ENCODE measurements at regions of chr14 and their contacts with region 1.

Region 1: DNA sequence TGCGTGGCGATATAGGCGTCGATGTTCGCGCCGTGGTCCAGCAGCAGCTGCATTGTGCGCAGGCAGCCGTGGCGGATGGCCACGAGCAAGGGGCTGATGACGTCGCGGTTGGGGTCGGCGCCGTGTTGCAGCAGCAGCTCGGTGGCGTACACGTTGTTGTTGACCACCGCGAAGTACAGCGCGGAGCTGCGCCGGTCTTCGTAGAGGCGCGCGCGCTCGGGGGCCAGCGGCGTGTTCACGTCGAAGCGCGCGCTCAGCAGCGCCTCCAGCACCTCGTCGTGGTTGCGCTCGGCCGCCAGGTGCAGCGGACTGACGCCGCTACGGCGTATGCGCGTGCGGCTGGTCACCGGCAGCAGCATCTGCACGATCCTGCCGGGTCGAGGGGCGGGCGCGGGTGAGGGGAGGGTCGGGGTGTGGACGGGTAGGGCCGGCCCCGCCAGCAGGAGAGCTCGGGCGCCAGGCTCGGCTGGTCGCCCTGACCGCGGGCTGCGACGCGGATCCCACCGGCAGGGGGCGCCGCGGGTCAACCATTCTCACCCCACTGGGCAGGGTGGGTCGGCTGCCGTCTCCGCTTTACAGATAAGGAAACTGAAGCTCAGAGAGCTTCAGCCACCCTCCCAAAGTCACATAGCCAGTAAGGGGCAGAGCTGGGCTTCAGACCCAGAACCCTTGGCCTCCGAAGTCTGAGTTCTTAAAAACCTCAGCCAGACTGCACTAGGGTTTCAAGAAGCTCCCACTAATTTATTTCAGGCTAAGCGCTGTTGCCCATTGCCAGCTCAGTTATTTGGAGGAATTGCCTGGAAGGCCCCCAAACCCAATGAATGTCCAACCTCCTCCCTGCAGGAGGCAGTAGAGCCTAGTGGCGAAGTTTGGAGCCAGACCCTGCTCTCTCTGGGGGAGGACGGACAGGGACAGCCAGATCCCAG is 12.4 kb downstream of the FAM181A start:
- DNase-seq: peak; percentile 76 to 86
- H3K4me3 ChIP-seq: peak overlapping the region; percentile 30 to 31
- H3K27ac ChIP-seq: peak overlapping the region; percentile 37 to 62
- H3K4me1 ChIP-seq: peaks cover 0 to 27% (median 12%) of the 10 kb centered on the region in 4 donors
- H3K27me3 ChIP-seq: no peaks in the 10 kb centered on the region
- CTCF ChIP-seq: peak; percentile 88 to 95

Region 2: GRCh38 chr14:94001501-94002396 is 62.2 kb after region 1 on chr14:
- intact Hi-C with region 1: loop called (anchors 1 kb)
- DNase-seq: peak in 1 of 2 donors; percentile 41
- H3K4me3 ChIP-seq: no peak overlapping the region
- H3K27ac ChIP-seq: no peak overlapping the region
- H3K4me1 ChIP-seq: peaks cover 0 to 12% (median 2%) of the 10 kb centered on the region in 4 donors
- H3K27me3 ChIP-seq: no peaks in the 10 kb centered on the region
- CTCF ChIP-seq: peak; percentile 95 to 96

Region 3: GRCh38 chr14:94136575-94137331 is 197.2 kb after region 1 on chr14:
- intact Hi-C with region 1: loop called (anchors 10 kb)
- DNase-seq: peak; percentile 90 to 91
- H3K4me3 ChIP-seq: no peak overlapping the region
- H3K27ac ChIP-seq: no peak overlapping the region
- H3K4me1 ChIP-seq: peaks cover 0 to 3% (median 0%) of the 10 kb centered on the region in 4 donors
- H3K27me3 ChIP-seq: peaks cover 0 to 16% of the 10 kb centered on the region in 2 donors
- CTCF ChIP-seq: peak; percentile 94 to 97

Measured in tibial artery (tissue), 4 donors.